ENCODE measurements at regions of chr1 and their contacts with region 1.

Region 1: DNA sequence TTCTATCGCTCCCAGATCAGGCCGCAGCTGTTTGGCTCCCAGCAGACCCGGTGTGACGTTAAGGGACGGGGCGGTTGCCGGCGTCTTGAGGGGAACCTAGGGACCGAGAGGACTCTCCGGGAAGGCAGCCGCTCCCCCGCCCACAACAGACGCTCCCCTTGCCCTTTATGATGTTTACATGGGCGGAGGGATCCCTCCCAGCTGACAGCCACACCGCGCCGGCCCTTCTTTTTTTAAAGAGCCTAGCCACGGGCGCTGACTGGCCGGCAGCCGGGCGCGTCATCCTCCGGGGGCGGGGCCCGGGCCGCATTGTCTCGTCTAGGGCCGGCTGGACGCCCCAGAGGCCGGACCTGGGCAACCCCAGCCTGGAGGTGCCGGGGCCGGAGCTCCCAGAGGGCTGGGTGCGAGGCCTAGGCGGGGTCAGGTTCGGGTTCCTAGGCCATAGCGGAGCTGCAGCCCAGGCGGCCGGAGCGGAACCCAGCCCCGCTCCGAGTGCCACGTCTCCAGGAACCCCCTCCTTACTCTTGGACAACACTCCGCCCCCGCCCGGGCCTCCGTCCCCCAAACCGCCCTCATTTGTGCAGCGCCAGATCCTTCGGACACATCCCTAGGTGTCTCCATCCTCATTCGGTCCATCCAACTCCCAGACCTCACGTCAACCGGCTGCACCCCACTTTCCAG is at the start of gene PCAT6:
- DNase-seq: peak; percentile 92 to 95
- ATAC-seq: peak; percentile 79 to 85
- H3K4me3 ChIP-seq: peak within 1 kb of the TSS; percentile 69 to 94 (median 78)
- H3K27ac ChIP-seq: peak within 1 kb of the TSS; percentile 83 to 88 (median 86)
- H3K4me1 ChIP-seq: peaks cover 15 to 17% of the 10 kb centered on the region in 2 donors
- H3K27me3 ChIP-seq: no peaks in the 10 kb centered on the region
- CTCF ChIP-seq: peak in 1 of 5 experiments; percentile 17
- POLR2A ChIP-seq: peak; percentile 73 to 94
- total RNA-seq, gene PCAT6: 4.3 TPM in 1 of 4 donors, not detected in the others

Region 2: DNA sequence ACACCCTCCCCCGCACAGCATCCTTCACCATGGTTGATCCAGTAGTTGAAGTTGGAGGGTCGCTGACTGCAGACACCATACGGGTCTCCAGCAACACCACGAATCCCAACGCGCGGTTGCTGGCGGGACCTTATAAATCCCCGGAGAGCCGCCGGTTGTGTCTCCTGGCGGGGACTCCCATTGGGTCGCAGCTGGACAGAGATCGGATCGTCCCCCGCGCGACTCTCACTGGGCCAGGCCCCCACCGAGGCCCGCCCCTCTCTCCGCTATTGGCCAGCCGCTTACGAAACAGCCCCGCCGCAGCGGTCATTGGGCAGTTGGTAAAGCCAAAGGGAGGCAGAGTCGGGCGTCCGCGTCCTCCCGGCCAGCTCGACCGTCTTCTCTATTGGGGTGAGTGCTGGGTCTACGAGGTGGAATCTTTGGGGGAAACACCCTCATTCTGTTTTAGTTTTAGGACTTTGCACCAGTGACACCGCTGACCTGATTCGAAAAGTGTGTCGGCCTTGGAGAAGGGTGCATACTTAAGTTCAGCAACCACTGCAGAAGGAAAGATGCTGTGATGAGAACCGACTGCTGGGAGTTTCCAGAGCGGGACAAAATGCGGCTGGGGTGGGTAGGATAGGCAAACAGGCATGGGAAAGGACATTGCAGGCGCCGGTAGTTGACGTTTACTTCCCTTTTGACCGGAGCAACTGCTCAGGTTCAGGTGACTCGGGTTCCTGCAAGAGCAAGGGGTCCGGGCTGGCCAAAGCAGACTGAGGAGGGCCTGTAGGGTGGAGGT is 50.9 kb after region 1 on chr1:
- in situ Hi-C with region 1: no loop called
- intact Hi-C with region 1: loop called (anchors 2 kb)
- DNase-seq: peak; percentile 85 to 87
- ATAC-seq: peak; percentile 93
- H3K4me3 ChIP-seq: peak overlapping the region; percentile 59 to 82 (median 72)
- H3K27ac ChIP-seq: peak overlapping the region in 1 of 4 donors; percentile 45
- H3K4me1 ChIP-seq: peaks cover 11 to 14% of the 10 kb centered on the region in 2 donors
- H3K27me3 ChIP-seq: no peaks in the 10 kb centered on the region
- CTCF ChIP-seq: no peak
- POLR2A ChIP-seq: peak in 1 of 2 donors; percentile 52

Region 3: DNA sequence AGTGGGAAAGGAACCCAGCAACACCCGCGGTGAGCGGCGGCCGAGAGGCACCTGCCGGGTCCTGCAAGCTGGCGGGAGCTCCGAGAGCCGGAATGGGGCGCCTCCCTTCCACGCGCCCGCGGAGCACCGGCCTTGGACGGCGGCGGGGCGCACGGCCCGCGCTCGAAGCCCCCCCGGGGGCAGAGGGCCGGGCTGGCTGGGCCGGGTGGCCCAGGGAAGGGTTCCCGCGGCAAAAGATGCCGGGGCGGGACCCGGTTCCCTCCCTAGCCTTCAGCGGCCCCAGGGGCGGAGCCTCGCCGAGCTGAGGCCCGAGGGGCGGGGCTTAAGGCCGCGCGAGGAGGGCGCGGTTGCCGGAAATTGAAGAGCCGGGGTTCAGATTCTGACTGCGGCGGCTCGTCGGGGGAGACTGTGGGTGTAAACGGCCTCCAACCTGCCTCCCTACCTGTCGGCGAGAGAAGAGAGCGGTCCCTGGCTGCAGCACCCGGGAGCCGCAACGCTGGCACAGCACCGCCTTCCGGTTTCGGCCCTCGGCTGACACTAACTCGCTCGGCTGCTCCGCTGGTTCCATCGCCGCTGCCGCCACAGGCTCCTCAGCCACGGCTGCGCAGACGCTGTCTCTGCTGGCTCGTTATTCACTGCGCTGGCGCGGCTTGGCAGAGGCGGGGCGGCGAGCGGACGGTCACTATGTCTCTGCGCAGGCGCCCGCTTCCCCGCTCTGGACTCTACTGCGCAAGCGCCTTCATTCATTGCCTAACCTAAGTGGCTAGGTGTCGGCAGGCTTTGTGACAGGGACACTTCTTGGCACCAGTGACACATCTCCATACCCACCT is 78.0 kb after region 1 on chr1 and contains the start of gene RABIF:
- in situ Hi-C with region 1: no loop called
- intact Hi-C with region 1: loop called (anchors 1 kb)
- DNase-seq: peak; percentile 91 to 96
- ATAC-seq: peak; percentile 95 to 96
- H3K4me3 ChIP-seq: peak within 1 kb of the TSS; percentile 77 to 98 (median 90)
- H3K27ac ChIP-seq: peak within 1 kb of the TSS; percentile 93 to 99 (median 96)
- H3K4me1 ChIP-seq: peaks cover 9 to 13% of the 10 kb centered on the region in 2 donors
- H3K27me3 ChIP-seq: no peaks in the 10 kb centered on the region
- CTCF ChIP-seq: peak in 2 of 5 experiments; percentile 23 to 36
- POLR2A ChIP-seq: peak; percentile 85 to 87
- total RNA-seq, gene RABIF: 2.6 to 9.2 (median 3.9) TPM

Region 4: GRCh38 chr1:202926720-202927491 is 116.2 kb after region 1 on chr1 and contains the start of gene KLHL12:
- in situ Hi-C with region 1: no loop called
- intact Hi-C with region 1: loop called (anchors 2 kb)
- DNase-seq: peak; percentile 94
- ATAC-seq: peak; percentile 94 to 97
- H3K4me3 ChIP-seq: peak within 1 kb of the TSS; percentile 75 to 100 (median 88)
- H3K27ac ChIP-seq: peak within 1 kb of the TSS; percentile 92 to 98 (median 94)
- H3K4me1 ChIP-seq: peaks cover 14 to 30% of the 10 kb centered on the region in 2 donors
- H3K27me3 ChIP-seq: no peaks in the 10 kb centered on the region
- CTCF ChIP-seq: peak; percentile 79 to 84 (median 81)
- POLR2A ChIP-seq: peak; percentile 78 to 83
- total RNA-seq, gene KLHL12: 12.1 to 24.0 (median 12.6) TPM

Region 5: GRCh38 chr1:203006948-203007871 is 196.5 kb after region 1 on chr1 and contains the start of gene TMEM183A:
- in situ Hi-C with region 1: no loop called
- intact Hi-C with region 1: loop called (anchors 2 kb)
- DNase-seq: peak; percentile 93 to 96
- ATAC-seq: peak; percentile 96 to 98
- H3K4me3 ChIP-seq: peak within 1 kb of the TSS; percentile 91 to 100 (median 98)
- H3K27ac ChIP-seq: peak within 1 kb of the TSS; percentile 93 to 99 (median 97)
- H3K4me1 ChIP-seq: peaks cover 17 to 22% of the 10 kb centered on the region in 2 donors
- H3K27me3 ChIP-seq: no peaks in the 10 kb centered on the region
- CTCF ChIP-seq: no peak
- POLR2A ChIP-seq: peak; percentile 95 to 97
- total RNA-seq, gene TMEM183A: 28.7 to 41.4 (median 30.6) TPM